HCT116 (cell line): ENCODE measurements at regions of chr3 and their contacts with region 1.

Region 1: GRCh38 chr3:126782554-126782953 is 78.5 kb downstream of the CHCHD6 start:
- DNase-seq: peak; percentile 78
- ATAC-seq: peak; percentile 97
- H3K4me3 ChIP-seq: peak overlapping the region in 1 of 2 experiments; percentile 32; a peak in 2 of 4 replicates
- H3K27ac ChIP-seq: peak overlapping the region; percentile 44; the same call in 1 of the 2 replicates
- H3K4me1 ChIP-seq: peaks cover 22 to 42% of the 10 kb centered on the region in 2 experiments
- H3K27me3 ChIP-seq: no peaks in the 10 kb centered on the region
- CTCF ChIP-seq: no peak
- POLR2A ChIP-seq: no peak
- RAD21 ChIP-seq: no peak

Region 2: DNA sequence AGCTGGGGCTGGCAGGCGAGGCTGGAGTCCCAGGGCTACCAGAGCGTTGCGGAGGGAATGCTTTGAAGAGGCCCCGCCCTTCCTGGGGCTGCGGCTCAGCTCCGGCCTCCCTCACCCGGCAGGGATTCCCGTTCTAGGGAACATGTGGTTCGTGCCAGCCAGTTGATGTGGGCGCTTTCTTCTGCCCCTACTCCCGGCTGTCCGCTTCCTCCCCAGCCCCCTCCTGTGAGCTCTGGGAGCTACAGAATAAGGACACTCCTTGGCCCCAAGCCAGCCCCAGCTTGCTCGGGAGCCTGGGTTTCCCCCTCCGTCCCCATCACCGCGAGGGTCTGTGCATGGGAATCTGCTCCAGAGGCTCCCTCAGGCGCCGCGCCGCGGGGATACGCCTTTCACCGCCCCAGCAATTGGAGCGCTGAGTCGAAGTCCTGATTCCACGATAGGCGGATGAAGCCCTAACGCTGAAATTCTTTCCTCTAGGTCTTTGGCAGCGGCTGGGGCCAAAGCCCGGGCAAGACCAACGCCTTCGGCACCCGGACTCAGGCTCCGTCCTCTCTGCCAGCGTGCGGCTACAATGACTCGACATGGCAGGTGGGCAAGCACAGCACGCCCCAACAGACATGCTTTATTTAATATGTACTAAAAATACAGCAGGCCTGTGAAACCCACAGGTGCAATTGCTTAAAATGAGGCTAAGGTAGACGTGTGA is 494.9 kb before region 1 on chr3:
- CTCF ChIA-PET with region 1: no interaction called
- POLR2A ChIA-PET with region 1: no interaction called
- RAD21 ChIA-PET with region 1: no interaction called
- intact Hi-C with region 1: no loop called
- DNase-seq: peak; percentile 21
- ATAC-seq: peak; percentile 87
- H3K4me3 ChIP-seq: peak overlapping the region; percentile 8 to 43; a peak in 3 of 4 replicates
- H3K27ac ChIP-seq: no peak overlapping the region; the same call in 1 of the 2 replicates
- H3K4me1 ChIP-seq: peaks cover 15 to 39% of the 10 kb centered on the region in 2 experiments
- H3K27me3 ChIP-seq: no peaks in the 10 kb centered on the region
- CTCF ChIP-seq: no peak
- POLR2A ChIP-seq: no peak
- RAD21 ChIP-seq: no peak

Region 3: DNA sequence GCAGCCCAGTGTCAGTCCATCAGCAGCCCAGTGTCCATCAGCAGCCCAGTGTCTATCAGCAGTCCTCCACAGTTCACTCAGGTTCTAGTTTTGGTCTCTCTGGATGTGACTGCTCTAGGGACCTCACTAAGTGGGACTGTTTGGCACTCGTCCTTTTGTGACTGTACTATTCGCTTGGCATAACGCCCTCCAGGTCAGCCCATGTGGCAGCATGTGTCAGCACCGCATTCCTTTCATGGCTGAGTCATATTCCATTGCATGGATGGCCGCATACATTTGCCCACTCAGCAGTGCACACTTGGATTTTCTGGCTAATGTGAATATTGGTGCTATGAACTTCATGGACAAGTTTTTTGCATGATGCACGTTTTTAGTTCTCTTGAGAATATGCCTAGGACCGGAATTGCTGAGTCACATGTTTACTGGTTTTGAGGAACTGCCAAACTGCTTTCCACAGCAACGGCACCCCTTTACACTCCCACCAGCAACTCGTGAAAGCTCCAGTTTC is 242.2 kb before region 1 on chr3:
- CTCF ChIA-PET with region 1: no interaction called
- POLR2A ChIA-PET with region 1: no interaction called
- RAD21 ChIA-PET with region 1: no interaction called
- intact Hi-C with region 1: no loop called
- DNase-seq: peak; percentile 76
- ATAC-seq: peak; percentile 84
- H3K4me3 ChIP-seq: no peak overlapping the region
- H3K27ac ChIP-seq: no peak overlapping the region
- H3K4me1 ChIP-seq: peaks cover 15 to 18% of the 10 kb centered on the region in 2 experiments; a peak in 3 of 4 replicates
- H3K27me3 ChIP-seq: 0 out of 2 replicates have a peak, but pooled peaks cover 10% of the 10 kb centered on the region
- CTCF ChIP-seq: no peak
- POLR2A ChIP-seq: no peak
- RAD21 ChIP-seq: no peak

Region 4: GRCh38 chr3:126911162-126912026 is 128.8 kb after region 1 on chr3:
- CTCF ChIA-PET with region 1: no interaction called
- POLR2A ChIA-PET with region 1: no interaction called
- RAD21 ChIA-PET with region 1: no interaction called
- intact Hi-C with region 1: loop called (anchors 2 kb)
- DNase-seq: peak; percentile 76
- ATAC-seq: peak; percentile 90
- H3K4me3 ChIP-seq: peak overlapping the region in 1 of 2 experiments; percentile 29; a peak in 1 of 4 replicates
- H3K27ac ChIP-seq: peak overlapping the region; percentile 50
- H3K4me1 ChIP-seq: peaks cover 2 to 49% of the 10 kb centered on the region in 2 experiments; a peak in 3 of 4 replicates
- H3K27me3 ChIP-seq: no peaks in the 10 kb centered on the region
- CTCF ChIP-seq: no peak
- POLR2A ChIP-seq: no peak
- RAD21 ChIP-seq: no peak